ENCODE measurements at regions of chr2 and their contacts with region 1.

Region 1: GRCh38 chr2:61538200-61538919 is at the start of gene XPO1:
- DNase-seq: peak; percentile 100
- H3K4me3 ChIP-seq: peak within 1 kb of the TSS; percentile 65 to 86 (median 76)
- H3K27ac ChIP-seq: peak within 1 kb of the TSS; percentile 92 to 97 (median 95)
- H3K4me1 ChIP-seq: peaks cover 20 to 34% (median 30%) of the 10 kb centered on the region in 4 donors
- H3K27me3 ChIP-seq: no peaks in the 10 kb centered on the region
- CTCF ChIP-seq: peak in 1 of 3 experiments; percentile 11
- EP300 ChIP-seq: no peak
- POLR2A ChIP-seq: peak; percentile 93
- total RNA-seq, gene XPO1: 55.8 to 117 (median 65.4) TPM

Region 2: GRCh38 chr2:61470965-61471904 is 67.1 kb before region 1 on chr2 and contains the start of gene USP34:
- intact Hi-C with region 1: loop called (anchors 5 kb)
- DNase-seq: peak; percentile 98
- H3K4me3 ChIP-seq: peak within 1 kb of the TSS; percentile 78 to 97 (median 90)
- H3K27ac ChIP-seq: peak within 1 kb of the TSS; percentile 95 to 99 (median 97)
- H3K4me1 ChIP-seq: peaks cover 15 to 47% (median 44%) of the 10 kb centered on the region in 4 donors
- H3K27me3 ChIP-seq: no peaks in the 10 kb centered on the region
- CTCF ChIP-seq: no peak
- EP300 ChIP-seq: no peak
- POLR2A ChIP-seq: peak; percentile 65
- total RNA-seq, gene USP34: 124 to 137 (median 129) TPM

Region 3: GRCh38 chr2:61694312-61695274 is 156.2 kb after region 1 on chr2:
- intact Hi-C with region 1: loop called (anchors 10 kb)
- DNase-seq: peak; percentile 97
- H3K4me3 ChIP-seq: peak overlapping the region; percentile 72 to 87 (median 84)
- H3K27ac ChIP-seq: peak overlapping the region; percentile 79 to 85 (median 82)
- H3K4me1 ChIP-seq: peaks cover 0 to 15% (median 13%) of the 10 kb centered on the region in 4 donors
- H3K27me3 ChIP-seq: no peaks in the 10 kb centered on the region
- CTCF ChIP-seq: peak; percentile 42 to 61 (median 56)
- EP300 ChIP-seq: no peak
- POLR2A ChIP-seq: no peak

Region 4: DNA sequence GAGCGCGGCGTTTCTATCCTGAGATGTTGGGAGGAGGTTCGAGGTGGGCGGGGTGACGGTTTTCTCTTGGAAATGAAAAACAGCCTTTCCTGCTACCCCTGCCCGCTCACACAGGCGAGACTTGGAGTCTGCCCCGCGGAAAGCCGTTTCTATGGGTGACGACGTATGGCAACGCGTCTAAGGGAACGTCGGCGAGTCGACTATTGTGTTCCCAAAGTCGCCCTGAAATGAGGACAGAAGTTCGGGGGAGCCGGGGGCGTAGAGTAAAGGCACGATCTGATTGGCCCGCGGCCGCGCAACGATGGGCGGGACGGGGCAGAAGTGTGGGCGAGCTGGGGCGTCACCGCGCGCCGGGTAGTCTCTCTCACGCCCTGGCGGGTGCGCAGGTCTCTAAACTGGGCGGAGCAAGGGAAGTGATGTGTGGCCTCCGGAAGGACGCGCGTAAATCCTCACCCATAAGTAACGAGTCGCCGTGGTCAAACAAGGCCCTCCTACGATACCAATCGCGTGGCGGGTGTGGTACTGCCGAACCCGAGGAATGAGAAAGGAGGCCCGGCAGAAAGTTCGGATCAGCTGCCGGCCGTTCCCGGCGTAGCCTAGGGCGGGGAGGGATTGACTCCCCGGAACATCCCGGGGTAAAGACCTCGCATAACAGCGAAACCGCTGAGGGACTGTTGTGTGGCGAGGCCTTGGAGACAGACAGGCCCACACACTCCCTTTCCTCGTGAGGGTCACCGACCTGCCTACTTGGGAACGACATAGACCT is 225.9 kb after region 1 on chr2:
- intact Hi-C with region 1: loop called (anchors 5 kb)
- DNase-seq: peak; percentile 99
- H3K4me3 ChIP-seq: peak overlapping the region; percentile 64 to 69 (median 68)
- H3K27ac ChIP-seq: peak overlapping the region; percentile 95 to 97 (median 96)
- H3K4me1 ChIP-seq: peaks cover 0 to 17% (median 10%) of the 10 kb centered on the region in 4 donors
- H3K27me3 ChIP-seq: no peaks in the 10 kb centered on the region
- CTCF ChIP-seq: no peak
- EP300 ChIP-seq: peak; percentile 35
- POLR2A ChIP-seq: peak; percentile 80

Region 5: GRCh38 chr2:61888267-61889055 is 350.1 kb after region 1 on chr2 and contains the start of gene CCT4:
- intact Hi-C with region 1: loop called (anchors 10 kb)
- DNase-seq: peak; percentile 96
- H3K4me3 ChIP-seq: peak within 1 kb of the TSS; percentile 68 to 85 (median 72)
- H3K27ac ChIP-seq: peak within 1 kb of the TSS; percentile 92 to 99 (median 94)
- H3K4me1 ChIP-seq: peaks cover 17 to 26% (median 20%) of the 10 kb centered on the region in 4 donors
- H3K27me3 ChIP-seq: no peaks in the 10 kb centered on the region
- CTCF ChIP-seq: no peak
- EP300 ChIP-seq: no peak
- POLR2A ChIP-seq: peak; percentile 51
- total RNA-seq, gene CCT4: 74.4 to 86.8 (median 79.5) TPM